ENCODE measurements at regions of chr3 and their contacts with region 1.

Region 1: DNA sequence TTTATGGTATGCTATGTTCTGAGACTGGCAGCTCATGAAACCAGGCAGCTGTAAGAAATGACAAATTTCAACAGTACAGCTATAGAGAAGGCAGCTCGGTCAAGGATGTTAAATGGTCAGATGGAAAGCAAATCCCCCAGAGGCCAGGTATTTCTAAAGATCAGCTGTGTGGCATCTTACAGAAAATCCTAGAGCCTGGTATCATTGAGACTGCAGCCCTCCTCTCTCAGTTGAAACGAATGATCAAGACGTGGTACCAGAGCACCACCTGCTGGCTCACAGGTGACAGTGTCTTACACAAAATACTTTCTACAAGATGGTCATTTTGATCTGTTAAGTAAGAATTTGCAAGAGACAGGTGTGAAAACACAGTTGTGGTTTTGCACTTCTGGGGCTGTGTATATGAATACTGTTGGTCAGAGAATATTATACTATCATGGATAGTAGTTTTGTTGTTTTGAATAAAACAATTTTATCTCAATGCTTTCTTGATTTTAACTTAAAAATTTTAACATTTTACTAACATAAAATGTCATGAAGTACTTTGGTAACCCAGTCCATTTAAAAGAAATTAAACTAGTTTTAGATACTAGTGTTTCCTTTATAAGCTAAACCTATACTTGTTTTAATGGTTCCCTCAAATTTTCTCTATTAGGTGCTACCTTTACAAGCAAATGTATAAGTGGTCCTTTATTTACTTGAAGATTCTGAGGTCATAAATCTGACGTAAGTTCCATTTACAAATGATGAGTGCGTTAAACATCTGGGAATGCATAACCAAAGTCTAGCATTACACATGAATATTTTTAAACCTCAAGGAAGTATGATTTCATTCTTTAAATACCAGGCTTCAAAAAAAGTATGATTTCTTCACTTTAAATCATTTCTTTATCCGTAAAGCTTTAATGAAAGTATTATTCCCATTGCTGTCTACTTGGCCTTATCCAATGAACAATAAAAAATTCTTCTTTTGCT is 121.8 kb downstream of the PDZRN3 start:
- DNase-seq: peak; percentile 57
- ATAC-seq: peak; percentile 65
- H3K4me3 ChIP-seq: no peak overlapping the region
- H3K27ac ChIP-seq: no peak overlapping the region
- H3K4me1 ChIP-seq: peaks cover 29% of the 10 kb centered on the region
- H3K27me3 ChIP-seq: no peaks in the 10 kb centered on the region
- CTCF ChIP-seq: peak; percentile 82 to 96 (median 94); a peak in 5 of 6 replicates
- EP300 ChIP-seq: no peak
- POLR2A ChIP-seq: no peak
- RAD21 ChIP-seq: peak; percentile 100

Region 2: GRCh38 chr3:73094951-73095350 is 407.9 kb before region 1 on chr3:
- CTCF ChIA-PET with region 1: interaction called, 91 read pairs
- POLR2A ChIA-PET with region 1: no interaction called
- RAD21 ChIA-PET with region 1: interaction called, 44 read pairs
- SMC1A ChIA-PET with region 1: interaction called, 30 read pairs
- in situ Hi-C with region 1: loop called (anchors 5 kb)
- intact Hi-C with region 1: no loop called
- DNase-seq: no peak
- ATAC-seq: peak; percentile 28; the same call in 2 of the 3 replicates
- H3K4me3 ChIP-seq: no peak overlapping the region
- H3K27ac ChIP-seq: no peak overlapping the region
- H3K4me1 ChIP-seq: no peaks in the 10 kb centered on the region
- H3K27me3 ChIP-seq: no peaks in the 10 kb centered on the region
- CTCF ChIP-seq: no peak
- EP300 ChIP-seq: no peak
- POLR2A ChIP-seq: no peak
- RAD21 ChIP-seq: no peak

Region 3: DNA sequence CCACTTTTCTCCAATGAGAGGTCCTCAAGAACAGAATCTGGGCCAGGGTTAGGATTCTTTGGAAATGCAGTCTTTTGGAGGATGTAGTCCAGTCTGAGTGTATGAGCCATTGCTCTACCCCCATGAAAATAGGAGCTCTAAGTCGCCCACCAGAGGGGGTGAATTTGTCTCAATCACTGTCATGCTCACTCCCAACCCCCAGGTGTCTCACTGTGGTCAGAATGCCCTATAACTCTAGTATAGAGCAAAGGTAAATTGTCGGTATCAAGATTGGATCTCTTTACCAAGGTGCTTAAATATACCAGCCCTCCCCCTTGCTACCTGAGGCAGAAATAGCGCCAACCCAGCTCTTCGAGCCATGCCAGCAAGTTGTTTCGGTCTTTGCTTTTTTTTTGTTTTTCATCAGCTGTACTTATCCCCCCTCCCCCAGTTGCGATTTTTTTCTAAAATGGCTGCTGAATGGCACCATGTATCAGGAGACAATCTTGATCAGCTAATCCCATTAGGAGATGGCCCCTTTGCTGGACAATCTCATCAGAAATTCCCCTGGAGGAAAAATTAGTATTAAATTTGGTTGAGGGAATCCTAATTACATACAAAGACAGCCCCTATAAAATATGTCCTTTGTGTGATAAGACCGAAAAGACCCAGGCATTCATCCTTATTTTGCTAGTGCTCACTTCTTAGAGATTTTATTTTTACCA is 310.7 kb before region 1 on chr3:
- CTCF ChIA-PET with region 1: interaction called, 11 read pairs
- POLR2A ChIA-PET with region 1: no interaction called
- RAD21 ChIA-PET with region 1: interaction called, 3 read pairs
- SMC1A ChIA-PET with region 1: interaction called, 5 read pairs
- in situ Hi-C with region 1: no loop called
- intact Hi-C with region 1: loop called (anchors 2 kb)
- DNase-seq: no peak
- ATAC-seq: peak; percentile 50
- H3K4me3 ChIP-seq: no peak overlapping the region
- H3K27ac ChIP-seq: no peak overlapping the region
- H3K4me1 ChIP-seq: no peaks in the 10 kb centered on the region
- H3K27me3 ChIP-seq: no peaks in the 10 kb centered on the region
- CTCF ChIP-seq: peak in 2 of 3 experiments; percentile 8 to 14; a peak in 1 of 6 replicates
- EP300 ChIP-seq: no peak
- POLR2A ChIP-seq: no peak
- RAD21 ChIP-seq: no peak

Region 4: DNA sequence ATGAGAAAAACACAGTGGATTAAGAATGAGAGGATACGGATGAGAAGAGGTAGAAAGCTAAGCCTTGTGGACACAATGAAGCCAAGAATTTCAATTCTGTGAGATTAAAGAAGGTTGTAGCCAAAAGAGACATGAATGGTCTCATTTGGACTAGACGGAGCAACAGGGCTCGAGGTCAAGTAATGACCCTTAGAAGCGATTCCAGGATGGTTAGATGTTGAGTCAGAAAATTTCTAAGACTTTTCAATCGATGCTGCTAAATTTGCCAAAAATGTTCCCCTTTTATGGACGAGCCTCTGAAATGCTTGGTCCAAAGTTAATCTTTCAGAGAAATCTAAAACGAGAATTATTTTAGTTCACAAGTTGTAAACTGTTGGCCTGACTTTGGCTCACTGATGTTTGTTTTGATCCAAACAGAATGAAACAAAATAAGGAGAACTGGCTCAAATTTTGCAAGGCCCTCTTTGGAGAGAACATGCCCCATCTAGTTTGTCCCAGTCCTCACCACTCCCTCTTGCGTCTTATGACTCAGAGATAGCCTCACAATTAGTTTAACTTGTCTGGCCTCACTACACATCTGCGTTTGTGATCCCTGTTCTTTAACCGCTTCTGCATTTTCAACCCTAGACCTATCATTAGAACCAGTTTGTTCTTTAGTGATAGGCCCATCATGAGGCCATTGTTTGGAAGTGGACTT is 113.6 kb before region 1 on chr3:
- CTCF ChIA-PET with region 1: no interaction called
- POLR2A ChIA-PET with region 1: no interaction called
- RAD21 ChIA-PET with region 1: no interaction called
- SMC1A ChIA-PET with region 1: no interaction called
- in situ Hi-C with region 1: no loop called
- intact Hi-C with region 1: no loop called
- DNase-seq: no peak
- ATAC-seq: no peak
- H3K4me3 ChIP-seq: no peak overlapping the region
- H3K27ac ChIP-seq: no peak overlapping the region
- H3K4me1 ChIP-seq: no peaks in the 10 kb centered on the region
- H3K27me3 ChIP-seq: no peaks in the 10 kb centered on the region; a peak in 1 of 4 replicates
- CTCF ChIP-seq: no peak
- EP300 ChIP-seq: no peak
- POLR2A ChIP-seq: no peak
- RAD21 ChIP-seq: no peak

Region 5: GRCh38 chr3:73432023-73432705 is 70.7 kb before region 1 on chr3:
- CTCF ChIA-PET with region 1: interaction called, 16 read pairs
- POLR2A ChIA-PET with region 1: no interaction called
- RAD21 ChIA-PET with region 1: interaction called, 3 read pairs
- SMC1A ChIA-PET with region 1: interaction called, 6 read pairs
- in situ Hi-C with region 1: no loop called
- intact Hi-C with region 1: no loop called
- DNase-seq: no peak
- ATAC-seq: peak; percentile 48; the same call in 2 of the 3 replicates
- H3K4me3 ChIP-seq: no peak overlapping the region
- H3K27ac ChIP-seq: no peak overlapping the region
- H3K4me1 ChIP-seq: no peaks in the 10 kb centered on the region
- H3K27me3 ChIP-seq: no peaks in the 10 kb centered on the region
- CTCF ChIP-seq: peak; percentile 53 to 62 (median 62)
- EP300 ChIP-seq: no peak
- POLR2A ChIP-seq: no peak
- RAD21 ChIP-seq: peak; percentile 62

Region 6: DNA sequence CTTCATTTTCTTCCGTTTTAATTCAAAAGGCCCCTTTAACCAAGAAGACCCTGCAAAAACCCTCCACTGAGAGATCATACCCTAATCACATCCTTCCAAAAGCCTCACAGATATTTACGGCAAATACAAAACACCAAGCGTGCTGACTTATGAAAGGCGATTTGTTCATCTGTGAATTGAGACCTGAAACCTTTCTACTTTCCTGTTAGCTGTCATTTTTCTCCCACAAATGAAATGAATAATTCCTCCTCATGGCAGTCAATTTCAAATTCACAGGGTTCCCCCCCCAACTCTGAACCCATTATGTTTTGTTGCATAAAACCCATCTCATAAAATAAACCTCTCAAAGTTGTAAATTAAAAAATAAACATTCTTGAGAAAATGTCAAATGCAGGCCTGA is 27.7 kb before region 1 on chr3:
- CTCF ChIA-PET with region 1: interaction called, 3 read pairs
- POLR2A ChIA-PET with region 1: no interaction called
- RAD21 ChIA-PET with region 1: interaction called, 3 read pairs
- SMC1A ChIA-PET with region 1: interaction called, 4 read pairs
- in situ Hi-C with region 1: no loop called
- intact Hi-C with region 1: loop called (anchors 1 kb)
- DNase-seq: no peak
- ATAC-seq: peak; percentile 64
- H3K4me3 ChIP-seq: peak overlapping the region; percentile 27; the same call in 1 of the 2 replicates
- H3K27ac ChIP-seq: 0 out of 2 replicates have a peak overlapping the region, but pooled peaks have one; percentile 20
- H3K4me1 ChIP-seq: peaks cover 17% of the 10 kb centered on the region
- H3K27me3 ChIP-seq: no peaks in the 10 kb centered on the region
- CTCF ChIP-seq: no peak
- EP300 ChIP-seq: no peak
- POLR2A ChIP-seq: no peak
- RAD21 ChIP-seq: no peak

Region 7: DNA sequence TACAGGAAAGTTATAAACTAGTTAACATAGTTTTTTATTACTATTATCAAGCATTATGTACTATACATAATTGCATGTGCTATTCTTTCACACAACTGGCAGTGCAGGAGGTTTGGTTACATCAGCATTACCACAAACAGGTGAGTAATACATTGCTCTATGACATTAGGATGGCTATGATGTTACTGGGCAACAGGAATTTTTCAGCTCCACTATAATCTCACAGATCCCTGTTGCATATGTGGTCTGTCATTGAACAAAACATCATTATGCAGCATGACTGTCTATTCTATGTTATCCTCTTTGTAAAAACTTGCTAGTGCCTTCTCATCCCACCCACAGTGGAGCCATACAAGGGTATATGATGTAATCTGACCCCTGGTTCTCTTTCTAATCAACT is 158.4 kb after region 1 on chr3:
- CTCF ChIA-PET with region 1: no interaction called
- POLR2A ChIA-PET with region 1: no interaction called
- RAD21 ChIA-PET with region 1: no interaction called
- SMC1A ChIA-PET with region 1: no interaction called
- in situ Hi-C with region 1: no loop called
- intact Hi-C with region 1: no loop called
- DNase-seq: no peak
- ATAC-seq: no peak
- H3K4me3 ChIP-seq: no peak overlapping the region
- H3K27ac ChIP-seq: no peak overlapping the region
- H3K4me1 ChIP-seq: no peaks in the 10 kb centered on the region
- H3K27me3 ChIP-seq: no peaks in the 10 kb centered on the region
- CTCF ChIP-seq: no peak
- EP300 ChIP-seq: no peak
- POLR2A ChIP-seq: no peak
- RAD21 ChIP-seq: no peak